H1 (cell line): ENCODE measurements at regions of chr5 and their contacts with region 1.

Region 1: DNA sequence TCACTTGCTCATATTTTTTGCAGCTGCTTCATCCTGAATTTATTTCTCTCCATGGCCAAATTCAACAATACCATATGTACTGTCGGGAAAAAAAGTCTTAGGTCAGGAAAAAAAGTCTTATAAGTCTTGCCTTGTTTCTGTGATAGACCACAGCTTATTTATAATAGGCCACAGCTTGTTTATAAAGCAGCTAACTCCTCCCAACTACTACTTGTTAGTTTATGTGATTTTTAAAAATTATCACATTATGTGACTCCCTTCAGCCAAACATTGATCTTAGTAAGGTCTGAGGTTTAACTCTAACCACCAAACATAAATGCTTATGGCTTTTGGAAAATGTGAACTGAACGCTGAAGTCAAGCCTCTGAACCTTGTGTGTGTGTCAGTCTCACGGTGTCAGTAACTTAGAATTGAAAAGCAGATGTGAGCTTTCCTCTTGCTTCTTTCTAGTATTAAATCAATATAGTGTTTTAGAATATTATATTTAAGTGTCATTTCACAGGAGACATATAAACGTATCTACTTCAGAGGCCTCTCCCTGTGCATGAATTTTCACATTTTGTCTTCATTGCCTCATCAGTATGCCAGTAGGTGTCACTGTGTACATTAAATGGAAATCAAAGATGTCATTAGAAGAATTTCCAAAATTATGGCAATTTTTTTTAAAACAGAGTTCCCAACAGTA is 51.3 kb downstream of the SNX24 start:
- DNase-seq: no peak
- H3K4me3 ChIP-seq: no peak overlapping the region
- H3K27ac ChIP-seq: no peak overlapping the region
- H3K4me1 ChIP-seq: no peaks in the 10 kb centered on the region
- H3K27me3 ChIP-seq: no peaks in the 10 kb centered on the region
- CTCF ChIP-seq: peak in 2 of 3 experiments; percentile 21 to 38; a peak in 2 of 4 replicates
- EP300 ChIP-seq: no peak
- POLR2A ChIP-seq: no peak
- RAD21 ChIP-seq: peak; percentile 53 to 56

Region 2: DNA sequence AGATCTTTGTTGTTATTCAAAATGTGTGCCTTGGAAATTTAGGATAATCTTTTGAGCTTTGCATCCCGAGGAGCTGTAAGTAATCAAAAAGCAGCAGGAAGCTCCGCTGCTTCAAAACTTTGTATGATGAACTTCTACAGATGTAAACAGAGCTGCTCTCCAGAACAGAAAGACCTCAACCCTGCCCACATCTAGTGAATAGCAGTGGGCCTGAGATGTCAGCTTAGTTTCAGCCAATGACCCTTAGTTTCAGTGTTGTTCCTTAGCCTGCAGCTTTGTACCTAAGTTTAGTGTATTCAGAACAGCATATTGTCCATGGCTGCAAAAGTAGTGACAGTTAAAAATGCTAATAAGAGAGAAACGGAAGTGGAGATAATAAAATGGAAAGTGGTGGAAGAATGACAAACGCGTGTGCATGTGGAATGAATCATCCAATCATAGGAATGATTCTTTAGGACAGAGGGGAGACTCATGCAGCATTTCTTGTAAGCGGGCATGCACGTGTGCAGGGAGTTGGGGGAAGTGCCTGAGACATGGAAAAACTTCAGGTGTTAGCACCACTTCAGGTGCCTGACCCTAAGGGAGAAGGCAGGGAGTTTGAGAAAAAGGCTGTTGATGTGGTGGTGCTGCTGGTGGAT is 26.4 kb before region 1 on chr5:
- CTCF ChIA-PET with region 1: no interaction called
- POLR2A ChIA-PET with region 1: no interaction called
- DNase-seq: no peak
- H3K4me3 ChIP-seq: no peak overlapping the region
- H3K27ac ChIP-seq: no peak overlapping the region
- H3K4me1 ChIP-seq: peaks cover 0 to 4% (median 2%) of the 10 kb centered on the region in 4 experiments; a peak in 2 of 7 replicates
- H3K27me3 ChIP-seq: no peaks in the 10 kb centered on the region
- CTCF ChIP-seq: no peak
- EP300 ChIP-seq: no peak
- POLR2A ChIP-seq: no peak
- RAD21 ChIP-seq: no peak

Region 3: GRCh38 chr5:122924203-122924602 is 27.5 kb after region 1 on chr5:
- CTCF ChIA-PET with region 1: no interaction called
- POLR2A ChIA-PET with region 1: no interaction called
- DNase-seq: no peak
- H3K4me3 ChIP-seq: no peak overlapping the region
- H3K27ac ChIP-seq: no peak overlapping the region
- H3K4me1 ChIP-seq: peaks cover 0 to 25% (median 9%) of the 10 kb centered on the region in 4 experiments; a peak in 6 of 7 replicates
- H3K27me3 ChIP-seq: no peaks in the 10 kb centered on the region
- CTCF ChIP-seq: no peak
- EP300 ChIP-seq: no peak
- POLR2A ChIP-seq: no peak
- RAD21 ChIP-seq: no peak

Region 4: DNA sequence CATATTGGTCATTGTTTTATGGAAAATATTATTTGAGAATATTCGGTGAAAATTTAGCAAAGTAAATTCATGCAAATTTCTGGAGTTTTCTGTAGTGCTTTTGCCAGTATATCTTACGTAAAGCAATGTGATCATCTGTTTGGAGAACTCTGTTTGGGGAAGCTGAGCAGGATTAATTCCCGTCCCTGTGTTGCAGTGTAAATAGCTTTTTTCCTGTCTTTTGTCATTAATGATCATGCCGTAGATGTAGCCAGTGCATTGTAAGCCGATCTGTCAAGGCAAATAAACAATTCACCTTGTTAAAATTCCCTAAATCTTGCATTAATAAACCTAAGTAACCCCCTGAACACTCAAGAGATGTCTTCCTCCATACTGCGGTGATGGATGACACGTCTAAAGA is 100.6 kb after region 1 on chr5:
- CTCF ChIA-PET with region 1: interaction called, 10 read pairs
- POLR2A ChIA-PET with region 1: no interaction called
- DNase-seq: no peak
- H3K4me3 ChIP-seq: peak overlapping the region in 1 of 4 experiments; percentile 18; a peak in 1 of 8 replicates
- H3K27ac ChIP-seq: no peak overlapping the region
- H3K4me1 ChIP-seq: peaks cover 0 to 10% (median 2%) of the 10 kb centered on the region in 4 experiments; a peak in 4 of 7 replicates
- H3K27me3 ChIP-seq: no peaks in the 10 kb centered on the region
- CTCF ChIP-seq: no peak
- EP300 ChIP-seq: no peak
- POLR2A ChIP-seq: no peak
- RAD21 ChIP-seq: no peak